Astrocyte of the cerebellum (primary cell): ENCODE measurements at regions of chr2 and their contacts with region 1.

Region 1: DNA sequence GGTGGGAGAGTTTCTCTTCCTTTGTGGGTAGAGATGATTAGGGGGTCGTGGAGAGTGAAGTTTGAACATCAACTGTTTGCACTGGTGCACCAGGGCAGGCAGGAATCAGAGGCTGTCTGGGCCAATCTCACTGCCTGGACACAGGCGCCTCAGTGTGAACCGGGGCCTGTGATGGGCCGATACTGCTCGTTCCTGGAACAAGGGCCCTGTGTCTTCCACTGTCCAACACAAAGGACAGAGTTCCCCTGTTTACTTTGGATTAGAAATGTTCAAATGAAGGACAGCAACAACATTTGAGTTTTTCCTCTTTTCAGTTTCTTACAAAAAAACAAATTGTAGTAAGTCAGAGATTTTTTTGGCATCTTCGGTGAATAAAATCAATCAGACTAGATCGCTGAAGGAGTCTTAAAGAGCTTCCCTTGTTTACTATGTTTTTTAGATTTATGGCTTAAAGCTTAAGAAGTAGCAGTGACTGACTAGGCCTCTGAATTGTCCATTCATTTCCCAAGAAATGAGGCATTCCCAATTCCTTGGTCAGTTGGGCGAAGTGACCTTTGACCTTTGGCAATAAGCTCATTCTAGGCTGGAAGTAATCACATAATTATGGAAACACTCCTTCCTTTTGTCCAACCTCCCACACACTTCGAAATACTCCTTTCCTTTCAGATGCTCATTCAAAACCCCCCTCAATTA is 11.6 kb upstream of the TGFA start:
- DNase-seq: no peak
- H3K4me3 ChIP-seq: no peak overlapping the region
- CTCF ChIP-seq: no peak

Region 2: DNA sequence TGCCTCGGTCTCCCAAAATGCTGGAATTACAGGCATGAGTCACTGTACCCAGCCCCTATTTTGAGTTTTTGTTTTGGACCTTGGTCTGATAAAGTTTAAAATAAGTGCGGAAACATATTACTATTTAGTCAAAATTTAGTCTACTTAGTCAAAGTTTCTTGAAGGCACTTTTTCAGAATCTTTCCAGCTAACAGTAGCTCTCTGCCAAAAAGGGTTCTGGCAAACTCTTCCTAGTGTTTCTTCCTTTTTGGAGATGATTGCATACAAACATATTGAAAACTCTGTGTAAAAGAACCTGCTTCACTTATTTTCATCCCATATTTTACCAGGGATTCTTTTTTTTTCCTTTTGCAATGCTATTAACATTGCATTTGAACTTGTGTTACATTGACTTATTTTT is 706.9 kb before region 1 on chr2:
- in situ Hi-C with region 1: no loop called
- DNase-seq: no peak
- H3K4me3 ChIP-seq: no peak overlapping the region
- CTCF ChIP-seq: no peak

Region 3: GRCh38 chr2:70460333-70460732 is 104.9 kb before region 1 on chr2:
- in situ Hi-C with region 1: loop called (anchors 5 kb)
- DNase-seq: no peak
- H3K4me3 ChIP-seq: no peak overlapping the region
- CTCF ChIP-seq: no peak